A549 (cell line): ENCODE measurements at regions of chr17 and their contacts with region 1.

Region 1: DNA sequence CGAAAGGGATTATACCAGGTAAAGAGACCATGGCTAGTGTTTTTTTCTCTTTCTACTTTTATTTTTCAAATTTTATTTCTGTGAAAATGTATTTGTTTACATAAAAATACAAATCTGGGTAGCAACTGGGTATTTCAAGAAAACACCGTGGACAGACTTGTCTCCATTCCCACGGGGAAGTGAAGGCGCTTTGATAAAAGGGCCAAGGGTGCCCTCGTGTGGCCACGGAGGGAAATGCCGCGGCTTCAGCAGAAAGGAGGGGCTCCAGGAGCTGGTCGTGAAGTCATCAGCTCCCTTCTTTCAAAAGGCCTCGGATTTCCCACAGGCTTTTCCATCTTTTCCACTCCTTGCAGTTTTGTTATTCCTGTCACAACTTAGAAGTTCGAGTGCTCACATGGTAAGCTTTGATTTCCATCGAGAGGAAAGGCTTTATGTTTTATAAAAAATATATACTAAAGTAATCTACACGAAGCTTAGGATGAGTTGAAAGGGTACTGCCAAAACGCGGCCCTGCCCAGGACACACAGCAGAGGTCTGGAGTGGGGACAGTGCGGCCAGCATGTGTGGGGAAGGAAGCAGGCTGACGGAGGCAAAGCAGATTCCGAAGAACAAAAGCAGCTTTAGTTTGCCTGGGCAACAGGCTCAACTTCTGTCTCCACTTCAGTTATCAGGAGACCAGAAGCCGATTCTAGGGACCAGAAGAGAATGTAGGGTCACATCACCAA is 15.3 kb upstream of the MNT start:
- DNase-seq: peak; percentile 84 to 88
- ATAC-seq: peak; percentile 76 to 85
- H3K4me3 ChIP-seq: no peak overlapping the region
- H3K27ac ChIP-seq: no peak overlapping the region
- H3K4me1 ChIP-seq: peaks cover 7% of the 10 kb centered on the region; the same call in 1 of the 3 replicates
- CTCF ChIP-seq: peak; percentile 98
- EP300 ChIP-seq: no peak
- POLR2A ChIP-seq: no peak
- RAD21 ChIP-seq: peak; percentile 95 to 96

Region 2: DNA sequence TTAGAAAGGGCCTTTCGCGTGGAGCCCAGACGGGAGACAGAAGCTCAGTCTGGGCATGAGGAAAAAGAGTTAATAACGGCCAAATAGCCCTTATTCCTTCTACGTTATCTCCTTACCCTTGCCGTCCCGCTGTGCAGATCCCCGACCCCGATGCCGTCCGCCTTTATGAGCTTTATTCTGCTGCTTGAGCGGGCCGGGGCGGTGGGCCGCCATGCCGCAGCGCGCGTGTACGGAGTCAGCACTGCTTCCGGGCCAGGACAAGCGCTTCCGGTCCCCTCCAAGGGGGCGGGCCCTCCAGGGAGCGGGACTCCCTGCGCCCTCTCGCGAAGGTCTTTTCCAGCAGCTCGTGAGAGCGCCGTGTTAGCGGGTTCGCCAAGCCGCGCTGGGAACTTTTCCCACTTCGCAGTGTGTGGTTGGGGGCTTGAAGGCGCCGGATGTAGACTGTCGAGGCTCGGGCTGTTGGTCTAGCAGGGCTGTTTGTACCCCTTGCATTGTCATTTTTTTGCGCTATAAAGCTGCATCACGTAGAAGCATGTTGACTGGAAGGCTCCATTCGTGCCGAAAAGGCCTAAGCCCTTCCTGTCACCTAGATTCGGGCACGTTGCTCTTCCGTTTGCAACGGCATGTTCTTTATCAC is 79.8 kb before region 1 on chr17 and contains the start of gene TSR1:
- CTCF ChIA-PET with region 1: interaction called, 13 read pairs
- POLR2A ChIA-PET with region 1: interaction called, 4 read pairs
- DNase-seq: peak; percentile 94 to 99
- ATAC-seq: peak; percentile 92 to 97
- H3K4me3 ChIP-seq: peak within 1 kb of the TSS; percentile 99
- H3K27ac ChIP-seq: peak within 1 kb of the TSS; percentile 94 to 99
- H3K4me1 ChIP-seq: peaks cover 20% of the 10 kb centered on the region
- CTCF ChIP-seq: peak; percentile 38
- EP300 ChIP-seq: no peak
- POLR2A ChIP-seq: peak; percentile 83
- RAD21 ChIP-seq: peak in 1 of 2 experiments; percentile 19; a peak in 2 of 5 replicates
- polyA plus RNA-seq, gene TSR1: 38.3 and 45.7 TPM in 2 replicates

Region 3: DNA sequence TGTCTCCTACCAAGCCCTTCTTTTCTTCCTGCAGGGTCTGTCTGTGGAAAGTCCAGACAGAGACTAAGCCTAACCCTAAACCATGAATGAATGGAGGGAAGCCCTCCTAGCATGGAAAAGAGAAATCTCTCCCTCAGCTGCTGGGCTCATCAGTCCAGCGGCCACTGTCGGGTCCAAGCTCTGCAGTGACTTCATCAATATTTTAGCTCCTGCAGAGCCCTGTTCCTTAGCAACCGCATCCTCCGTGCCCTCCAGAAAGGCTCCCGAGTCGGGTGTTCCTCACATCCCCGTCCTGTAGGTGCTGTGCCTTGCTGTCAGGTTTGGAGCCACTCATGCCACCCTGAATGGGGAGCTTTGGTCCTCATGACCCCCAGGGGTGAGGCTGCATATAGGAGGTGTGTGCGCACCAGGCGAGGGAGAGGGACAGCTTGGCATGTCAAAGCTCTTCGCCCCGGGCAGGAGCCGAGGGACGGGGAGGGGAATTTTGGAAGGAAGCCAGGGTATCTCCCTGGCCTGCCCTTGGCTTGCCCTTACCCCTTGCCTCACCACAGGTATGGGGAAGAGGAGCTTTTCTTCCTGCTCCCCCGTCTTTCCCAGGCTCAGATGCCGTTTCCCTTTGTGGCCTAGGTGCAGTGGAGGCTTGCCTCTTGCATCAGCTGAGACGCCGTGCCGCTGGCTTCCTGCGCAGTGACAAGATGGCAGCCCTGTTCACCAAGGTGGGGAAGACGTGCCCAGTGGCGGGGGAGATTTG is 55.0 kb before region 1 on chr17:
- CTCF ChIA-PET with region 1: interaction called, 66 read pairs
- POLR2A ChIA-PET with region 1: interaction called, 7 read pairs
- DNase-seq: no peak
- ATAC-seq: no peak
- H3K4me3 ChIP-seq: no peak overlapping the region
- H3K27ac ChIP-seq: 0 out of 6 replicates have a peak overlapping the region, but pooled peaks of 1 of the 2 experiments have one; percentile 79
- H3K4me1 ChIP-seq: peaks cover 20% of the 10 kb centered on the region
- CTCF ChIP-seq: no peak
- EP300 ChIP-seq: no peak
- POLR2A ChIP-seq: no peak
- RAD21 ChIP-seq: no peak

Region 4: DNA sequence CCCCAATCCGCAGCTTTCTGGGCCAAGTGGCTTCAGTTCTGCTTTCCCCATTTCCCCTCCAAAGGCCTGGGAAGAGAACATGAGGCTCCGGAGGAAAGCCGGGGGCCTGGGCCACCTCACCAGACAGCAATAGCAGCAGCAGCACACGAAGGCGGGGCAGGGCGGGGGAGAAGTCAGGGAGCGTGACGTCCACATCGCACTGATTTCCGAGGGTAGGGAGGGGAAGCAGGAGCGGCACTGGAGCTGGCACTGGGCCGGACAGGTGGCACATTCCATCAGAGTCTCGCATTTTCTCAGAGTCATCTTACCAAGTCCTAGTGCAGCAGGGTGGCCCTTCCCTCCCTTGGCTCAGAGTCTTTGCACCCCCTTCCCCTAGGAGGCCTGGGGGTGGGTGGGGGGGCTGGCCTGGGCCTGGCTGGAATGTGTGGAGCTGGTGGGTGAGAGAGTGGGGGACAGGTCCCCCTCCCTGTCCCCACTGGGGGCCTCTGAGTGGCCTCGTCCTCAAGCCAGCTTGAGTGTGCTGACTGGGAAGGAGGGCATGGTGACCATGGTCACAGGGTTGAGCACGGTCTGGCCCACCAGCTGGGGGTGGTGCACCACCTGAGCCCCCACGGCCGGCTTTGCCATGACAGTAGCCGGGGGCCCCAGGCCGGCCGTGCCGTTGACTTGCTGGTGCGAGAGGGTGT is 29.6 kb before region 1 on chr17:
- CTCF ChIA-PET with region 1: interaction called, 1,099 read pairs
- POLR2A ChIA-PET with region 1: interaction called, 14 read pairs
- DNase-seq: peak in 1 of 2 experiments; percentile 42
- ATAC-seq: no peak
- H3K4me3 ChIP-seq: no peak overlapping the region
- H3K27ac ChIP-seq: no peak overlapping the region
- H3K4me1 ChIP-seq: peaks cover 11% of the 10 kb centered on the region
- CTCF ChIP-seq: no peak
- EP300 ChIP-seq: no peak
- POLR2A ChIP-seq: no peak
- RAD21 ChIP-seq: no peak

Region 5: GRCh38 chr17:2401426-2402221 is 14.5 kb before region 1 on chr17:
- CTCF ChIA-PET with region 1: interaction called, 1,099 read pairs
- POLR2A ChIA-PET with region 1: interaction called, 12 read pairs
- DNase-seq: peak; percentile 98 to 100
- ATAC-seq: peak; percentile 23 to 64
- H3K4me3 ChIP-seq: peak overlapping the region; percentile 99
- H3K27ac ChIP-seq: peak overlapping the region; percentile 95 to 97
- H3K4me1 ChIP-seq: peaks cover 60% of the 10 kb centered on the region
- CTCF ChIP-seq: no peak
- EP300 ChIP-seq: no peak
- POLR2A ChIP-seq: no peak
- RAD21 ChIP-seq: no peak

Region 6: GRCh38 chr17:2435181-2435741 is 19.1 kb after region 1 on chr17:
- CTCF ChIA-PET with region 1: interaction called, 98 read pairs
- POLR2A ChIA-PET with region 1: no interaction called
- DNase-seq: no peak
- ATAC-seq: no peak
- H3K4me3 ChIP-seq: no peak overlapping the region
- H3K27ac ChIP-seq: no peak overlapping the region
- H3K4me1 ChIP-seq: no peaks in the 10 kb centered on the region
- CTCF ChIP-seq: no peak
- EP300 ChIP-seq: no peak
- POLR2A ChIP-seq: no peak
- RAD21 ChIP-seq: no peak